ENCODE measurements at regions of chr9 and their contacts with region 1.

Region 1: DNA sequence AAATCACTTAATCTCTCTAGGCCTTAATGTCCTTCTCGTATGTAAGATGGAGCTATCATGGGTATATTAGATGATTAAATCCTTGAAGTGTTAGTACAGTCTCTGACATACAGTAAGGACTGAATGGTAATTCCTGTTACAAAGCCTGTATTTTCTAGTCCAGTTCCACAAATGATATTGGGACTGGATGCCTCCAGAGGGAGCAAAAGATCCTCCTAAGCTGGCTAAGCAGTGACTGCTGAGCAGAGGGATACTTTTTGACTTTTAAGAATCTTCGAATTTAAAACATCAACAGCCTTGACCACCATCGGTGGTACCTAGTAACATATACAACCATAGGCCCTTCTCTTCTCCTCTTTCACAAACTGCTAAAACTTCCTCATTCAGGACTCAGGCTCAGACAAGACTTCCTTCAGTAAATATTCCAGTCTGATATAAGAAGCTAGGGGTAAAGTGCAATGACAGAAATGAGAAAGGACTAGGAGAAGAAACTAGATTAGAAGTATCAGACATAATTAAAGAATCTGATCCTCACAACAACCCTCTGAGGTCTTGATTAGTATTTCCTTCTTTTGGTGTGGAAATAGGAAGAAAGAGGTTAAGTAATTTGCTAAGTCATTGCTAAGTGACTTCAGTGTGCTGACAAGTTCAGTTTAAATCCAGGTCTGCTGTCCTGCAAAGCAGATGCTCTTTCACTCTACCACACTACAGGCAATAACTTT is 13.9 kb downstream of the PTAR1 start:
- DNase-seq: peak; percentile 47
- ATAC-seq: peak; percentile 57
- H3K4me3 ChIP-seq: no peak overlapping the region
- H3K27ac ChIP-seq: no peak overlapping the region
- H3K4me1 ChIP-seq: peaks cover 22% of the 10 kb centered on the region
- H3K27me3 ChIP-seq: no peaks in the 10 kb centered on the region
- CTCF ChIP-seq: peak; percentile 49
- POLR2A ChIP-seq: no peak
- RAD21 ChIP-seq: peak; percentile 60

Region 2: GRCh38 chr9:69554945-69555344 is 190.9 kb before region 1 on chr9:
- CTCF ChIA-PET with region 1: no interaction called
- POLR2A ChIA-PET with region 1: no interaction called
- dilution Hi-C with region 1: no loop called
- in situ Hi-C with region 1: no loop called
- intact Hi-C with region 1: no loop called
- DNase-seq: peak; percentile 93
- ATAC-seq: peak; percentile 88
- H3K4me3 ChIP-seq: no peak overlapping the region
- H3K27ac ChIP-seq: no peak overlapping the region
- H3K4me1 ChIP-seq: no peaks in the 10 kb centered on the region
- H3K27me3 ChIP-seq: 0 out of 2 replicates have a peak, but pooled peaks cover 2% of the 10 kb centered on the region
- CTCF ChIP-seq: no peak
- POLR2A ChIP-seq: no peak
- RAD21 ChIP-seq: no peak

Region 3: DNA sequence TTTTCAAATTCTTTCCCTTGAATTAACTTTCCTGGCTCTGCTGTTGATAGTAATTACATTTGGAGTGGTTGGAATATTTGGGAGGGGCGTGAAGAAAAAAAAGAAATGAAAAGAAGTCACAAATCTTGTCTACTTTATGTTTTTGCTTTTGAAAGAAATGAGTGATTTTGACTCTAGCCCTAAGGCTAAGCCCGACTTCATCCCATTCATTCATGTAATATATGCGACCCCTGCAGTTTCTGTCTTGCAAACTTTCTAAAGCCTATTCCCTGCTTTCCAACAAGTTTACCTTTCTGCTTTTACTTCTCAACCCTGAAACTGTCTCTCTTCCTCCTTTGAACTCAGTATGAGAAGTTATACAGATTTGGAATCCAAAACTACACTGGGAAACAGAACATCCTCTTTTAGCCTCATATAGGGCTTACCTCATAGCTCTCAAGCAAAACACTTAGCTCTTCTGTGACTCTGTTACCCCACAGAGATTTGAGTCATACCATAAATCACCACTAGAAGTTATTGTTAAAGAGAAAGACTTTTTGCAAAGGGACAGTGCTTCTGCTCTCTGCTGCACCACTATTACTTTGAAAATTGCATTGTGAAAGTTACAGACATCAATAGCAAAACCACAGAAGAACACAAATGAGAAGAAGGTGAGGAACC is 76.3 kb after region 1 on chr9:
- CTCF ChIA-PET with region 1: no interaction called
- POLR2A ChIA-PET with region 1: no interaction called
- dilution Hi-C with region 1: no loop called
- in situ Hi-C with region 1: no loop called
- intact Hi-C with region 1: no loop called
- DNase-seq: peak; percentile 81
- ATAC-seq: peak; percentile 72
- H3K4me3 ChIP-seq: no peak overlapping the region
- H3K27ac ChIP-seq: no peak overlapping the region
- H3K4me1 ChIP-seq: peaks cover 2% of the 10 kb centered on the region; the same call in 1 of the 2 replicates
- H3K27me3 ChIP-seq: peaks cover 14% of the 10 kb centered on the region
- CTCF ChIP-seq: no peak
- POLR2A ChIP-seq: no peak
- RAD21 ChIP-seq: no peak

Region 4: DNA sequence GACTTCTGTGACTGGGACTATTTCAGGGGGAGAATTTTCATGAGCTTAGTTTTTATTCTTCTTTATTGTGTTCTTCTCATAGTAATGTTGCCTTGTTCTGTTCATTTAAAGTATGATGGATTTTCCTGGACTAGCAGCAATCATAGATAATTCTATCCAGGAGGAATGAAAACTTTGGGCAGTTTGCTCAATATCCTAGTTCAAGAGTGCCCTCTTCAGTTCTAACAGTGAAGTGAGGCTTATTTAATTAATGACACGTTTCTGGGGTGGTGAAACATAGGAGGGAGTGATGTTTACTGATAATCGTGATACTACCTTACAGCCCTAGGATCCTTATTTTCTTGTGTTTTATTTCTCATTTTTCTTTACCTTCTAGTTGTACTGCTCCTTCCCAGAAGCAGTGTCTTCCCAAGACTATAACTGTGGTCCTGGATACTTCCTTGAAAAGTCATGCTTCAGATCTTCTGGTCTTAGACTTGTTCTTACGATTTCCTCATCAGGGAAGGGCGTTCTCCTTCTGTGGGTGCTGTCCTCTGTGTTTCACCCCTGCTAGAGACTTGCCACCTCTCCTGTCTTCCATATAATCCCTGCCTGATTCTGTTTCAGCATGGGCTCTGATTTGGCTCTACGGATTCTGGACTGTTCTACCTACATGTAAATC is 132.1 kb after region 1 on chr9:
- CTCF ChIA-PET with region 1: no interaction called
- POLR2A ChIA-PET with region 1: no interaction called
- dilution Hi-C with region 1: no loop called
- in situ Hi-C with region 1: no loop called
- intact Hi-C with region 1: loop called (anchors 10 kb)
- DNase-seq: peak; percentile 52
- ATAC-seq: peak; percentile 89
- H3K4me3 ChIP-seq: no peak overlapping the region
- H3K27ac ChIP-seq: no peak overlapping the region
- H3K4me1 ChIP-seq: peaks cover 2% of the 10 kb centered on the region; the same call in 1 of the 2 replicates
- H3K27me3 ChIP-seq: no peaks in the 10 kb centered on the region
- CTCF ChIP-seq: peak; percentile 79
- POLR2A ChIP-seq: no peak
- RAD21 ChIP-seq: peak; percentile 88

Region 5: GRCh38 chr9:69919461-69920061 is 173.7 kb after region 1 on chr9:
- CTCF ChIA-PET with region 1: interaction called, 3 read pairs
- POLR2A ChIA-PET with region 1: no interaction called
- dilution Hi-C with region 1: no loop called
- in situ Hi-C with region 1: no loop called
- intact Hi-C with region 1: loop called (anchors 5 kb)
- DNase-seq: peak; percentile 74
- ATAC-seq: peak; percentile 93
- H3K4me3 ChIP-seq: no peak overlapping the region
- H3K27ac ChIP-seq: no peak overlapping the region
- H3K4me1 ChIP-seq: peaks cover 2% of the 10 kb centered on the region; the same call in 1 of the 2 replicates
- H3K27me3 ChIP-seq: no peaks in the 10 kb centered on the region
- CTCF ChIP-seq: peak; percentile 82
- POLR2A ChIP-seq: no peak
- RAD21 ChIP-seq: peak; percentile 81

Region 6: GRCh38 chr9:70111042-70111602 is 365.2 kb after region 1 on chr9:
- CTCF ChIA-PET with region 1: no interaction called
- POLR2A ChIA-PET with region 1: no interaction called
- dilution Hi-C with region 1: no loop called
- in situ Hi-C with region 1: no loop called
- intact Hi-C with region 1: loop called (anchors 10 kb)
- DNase-seq: peak; percentile 81
- ATAC-seq: peak; percentile 67
- H3K4me3 ChIP-seq: no peak overlapping the region
- H3K27ac ChIP-seq: no peak overlapping the region
- H3K4me1 ChIP-seq: peaks cover 7% of the 10 kb centered on the region; the same call in 1 of the 2 replicates
- H3K27me3 ChIP-seq: no peaks in the 10 kb centered on the region
- CTCF ChIP-seq: peak; percentile 83
- POLR2A ChIP-seq: no peak
- RAD21 ChIP-seq: peak; percentile 82

Region 7: DNA sequence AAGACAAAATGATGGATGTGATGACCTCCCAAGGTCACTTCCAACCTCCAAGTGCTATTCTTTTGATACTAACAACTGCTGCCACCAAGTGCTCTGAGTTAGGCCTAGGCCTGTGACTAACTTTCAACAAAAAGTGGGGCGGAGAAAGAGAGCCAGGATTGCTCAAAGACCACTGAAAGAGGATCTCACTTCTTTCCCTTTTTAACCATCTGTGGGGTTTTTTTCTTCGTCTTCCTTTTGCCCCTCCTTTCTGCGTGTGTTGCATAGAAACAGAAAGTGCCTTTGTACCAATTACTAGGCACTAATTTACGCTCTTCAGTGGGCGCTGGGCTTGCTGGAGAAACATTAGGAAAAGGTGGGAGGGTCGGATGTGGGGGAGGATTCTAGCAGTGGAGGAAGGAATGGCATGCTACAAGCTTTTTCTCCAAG is 660.6 kb after region 1 on chr9:
- CTCF ChIA-PET with region 1: no interaction called
- POLR2A ChIA-PET with region 1: no interaction called
- dilution Hi-C with region 1: no loop called
- in situ Hi-C with region 1: no loop called
- intact Hi-C with region 1: no loop called
- DNase-seq: peak; percentile 62
- ATAC-seq: no peak
- H3K4me3 ChIP-seq: no peak overlapping the region
- H3K27ac ChIP-seq: peak overlapping the region; percentile 90
- H3K4me1 ChIP-seq: peaks cover 34% of the 10 kb centered on the region
- H3K27me3 ChIP-seq: no peaks in the 10 kb centered on the region
- CTCF ChIP-seq: no peak
- POLR2A ChIP-seq: peak; percentile 13; the same call in 1 of the 2 replicates
- RAD21 ChIP-seq: no peak